Right cardiac atrium (tissue), 5 donors: ENCODE measurements at regions of chr2 and their contacts with region 1.

Region 1: DNA sequence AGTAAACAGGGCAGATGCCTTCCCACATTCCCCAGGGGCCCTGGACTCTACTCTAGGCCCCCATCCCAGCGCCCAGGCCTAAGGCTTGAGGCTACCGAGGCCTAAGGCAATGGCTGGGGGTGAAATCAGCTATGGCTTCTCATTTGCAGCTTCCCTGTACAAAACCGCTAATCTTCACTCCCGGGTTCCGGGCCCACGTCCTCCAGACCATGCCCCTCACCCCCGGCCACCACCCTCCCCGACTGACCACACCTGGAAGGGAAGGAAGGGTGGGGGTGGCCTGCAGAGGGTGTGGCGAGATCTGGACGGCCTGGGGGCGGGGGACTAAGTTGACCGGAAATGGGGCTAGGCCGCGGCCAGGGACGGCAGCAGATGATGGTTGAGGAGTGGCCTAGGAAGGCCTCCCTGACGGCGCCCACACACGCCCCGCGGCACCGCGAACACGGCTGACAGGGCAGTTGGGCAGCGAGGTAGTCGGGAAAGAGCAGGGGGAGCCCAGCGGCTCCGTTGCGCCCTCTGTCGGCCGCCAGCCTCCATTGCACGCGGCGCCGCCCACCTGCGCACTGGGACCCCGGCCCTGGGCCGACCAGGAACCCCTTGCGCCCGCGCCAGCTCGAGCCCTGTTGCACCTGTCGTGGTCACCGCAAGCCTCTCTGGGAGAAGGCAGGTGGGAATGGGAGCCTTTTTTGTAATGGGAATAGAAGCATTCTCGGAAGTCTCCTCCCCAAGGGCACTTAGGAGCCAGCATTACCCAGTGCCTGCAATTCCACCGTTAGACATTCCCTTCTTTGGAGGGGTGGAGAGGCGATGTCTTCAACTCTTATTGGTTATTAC is 117.1 kb upstream of the STPG4 start:
- DNase-seq: peak; percentile 80 to 90 (median 90)
- ATAC-seq: peak; percentile 81 to 84
- H3K4me3 ChIP-seq: peak overlapping the region; percentile 26
- H3K27ac ChIP-seq: peak overlapping the region; percentile 45
- H3K4me1 ChIP-seq: peaks cover 11% of the 10 kb centered on the region
- H3K27me3 ChIP-seq: no peaks in the 10 kb centered on the region

Region 2: GRCh38 chr2:46984642-46985476 is 287.4 kb before region 1 on chr2:
- intact Hi-C with region 1: loop called in 1 of 4 experiments (anchors 5 kb)
- DNase-seq: peak; percentile 76 to 86 (median 80)
- ATAC-seq: peak; percentile 55 to 71
- H3K4me3 ChIP-seq: no peak overlapping the region
- H3K27ac ChIP-seq: peak overlapping the region; percentile 72
- H3K4me1 ChIP-seq: peaks cover 11% of the 10 kb centered on the region
- H3K27me3 ChIP-seq: no peaks in the 10 kb centered on the region

Region 3: GRCh38 chr2:47309952-47310800 is 37.9 kb after region 1 on chr2:
- intact Hi-C with region 1: loop called in 1 of 4 experiments (anchors 5 kb)
- DNase-seq: no peak
- ATAC-seq: peak; percentile 46 to 56
- H3K4me3 ChIP-seq: no peak overlapping the region
- H3K27ac ChIP-seq: peak overlapping the region; percentile 86
- H3K4me1 ChIP-seq: peaks cover 16% of the 10 kb centered on the region
- H3K27me3 ChIP-seq: no peaks in the 10 kb centered on the region